Left ventricle myocardium inferior (tissue), 1 donor: ENCODE measurements at regions of chr1 and their contacts with region 1.

Region 1: GRCh38 chr1:181166377-181167196 is 78.1 kb downstream of the IER5 start:
- DNase-seq: peak; percentile 44
- H3K4me3 ChIP-seq: no peak overlapping the region
- H3K27ac ChIP-seq: no peak overlapping the region
- H3K4me1 ChIP-seq: peaks cover 4% of the 10 kb centered on the region
- H3K27me3 ChIP-seq: no peaks in the 10 kb centered on the region
- CTCF ChIP-seq: peak; percentile 93

Region 2: GRCh38 chr1:180881806-180882509 is 284.6 kb before region 1 on chr1:
- intact Hi-C with region 1: loop called (anchors 10 kb)
- DNase-seq: no peak
- H3K4me3 ChIP-seq: no peak overlapping the region
- H3K27ac ChIP-seq: peak overlapping the region; percentile 24
- H3K4me1 ChIP-seq: no peaks in the 10 kb centered on the region
- H3K27me3 ChIP-seq: no peaks in the 10 kb centered on the region
- CTCF ChIP-seq: peak; percentile 60